CD4-positive, alpha-beta memory T cell (primary cell): ENCODE measurements at regions of chr1 and their contacts with region 1.

Region 1: GRCh38 chr1:241519308-241520079 is at the start of gene FH:
- DNase-seq: peak; percentile 92 to 95 (median 94)
- H3K4me3 ChIP-seq: peak within 1 kb of the TSS; percentile 75 to 76
- H3K4me3 Mint-ChIP-seq: peak within 1 kb of the TSS in 7 of 8 donors; percentile 84 to 93 (median 90)
- H3K27ac ChIP-seq: peak within 1 kb of the TSS; percentile 57
- H3K27ac Mint-ChIP-seq: peak within 1 kb of the TSS; percentile 54 to 95 (median 90)
- H3K4me1 ChIP-seq: peaks cover 17% of the 10 kb centered on the region
- H3K4me1 Mint-ChIP-seq: peaks cover 11 to 32% (median 22%) of the 10 kb centered on the region in 4 donors
- H3K27me3 ChIP-seq: peaks cover 8% of the 10 kb centered on the region
- H3K27me3 Mint-ChIP-seq: peaks cover 16 to 17% of the 10 kb centered on the region in 2 donors
- total RNA-seq, gene FH: 21.0 to 25.9 TPM

Region 2: GRCh38 chr1:241551759-241552638 is 32.5 kb after region 1 on chr1:
- CTCF ChIA-PET with region 1: no interaction called
- POLR2A ChIA-PET with region 1: interaction called, 3 read pairs
- intact Hi-C with region 1: loop called (anchors 1 kb)
- DNase-seq: peak; percentile 47 to 59 (median 49)
- H3K4me3 ChIP-seq: peak overlapping the region in 1 of 2 donors; percentile 46
- H3K4me3 Mint-ChIP-seq: peak overlapping the region; percentile 82 to 94 (median 90)
- H3K27ac ChIP-seq: peak overlapping the region; percentile 17
- H3K27ac Mint-ChIP-seq: peak overlapping the region; percentile 74 to 98 (median 96)
- H3K4me1 ChIP-seq: peaks cover 15% of the 10 kb centered on the region
- H3K4me1 Mint-ChIP-seq: peaks cover 13 to 22% (median 18%) of the 10 kb centered on the region in 4 donors
- H3K27me3 ChIP-seq: no peaks in the 10 kb centered on the region
- H3K27me3 Mint-ChIP-seq: peaks cover 0 to 3% of the 10 kb centered on the region in 2 donors